ENCODE measurements at regions of chr3 and their contacts with region 1.

Region 1: GRCh38 chr3:127147291-127147885 is 45.5 kb upstream of the PRR23E start:
- DNase-seq: no peak
- H3K4me3 ChIP-seq: no peak overlapping the region
- H3K27me3 ChIP-seq: peaks cover 4% of the 10 kb centered on the region
- CTCF ChIP-seq: no peak

Region 2: DNA sequence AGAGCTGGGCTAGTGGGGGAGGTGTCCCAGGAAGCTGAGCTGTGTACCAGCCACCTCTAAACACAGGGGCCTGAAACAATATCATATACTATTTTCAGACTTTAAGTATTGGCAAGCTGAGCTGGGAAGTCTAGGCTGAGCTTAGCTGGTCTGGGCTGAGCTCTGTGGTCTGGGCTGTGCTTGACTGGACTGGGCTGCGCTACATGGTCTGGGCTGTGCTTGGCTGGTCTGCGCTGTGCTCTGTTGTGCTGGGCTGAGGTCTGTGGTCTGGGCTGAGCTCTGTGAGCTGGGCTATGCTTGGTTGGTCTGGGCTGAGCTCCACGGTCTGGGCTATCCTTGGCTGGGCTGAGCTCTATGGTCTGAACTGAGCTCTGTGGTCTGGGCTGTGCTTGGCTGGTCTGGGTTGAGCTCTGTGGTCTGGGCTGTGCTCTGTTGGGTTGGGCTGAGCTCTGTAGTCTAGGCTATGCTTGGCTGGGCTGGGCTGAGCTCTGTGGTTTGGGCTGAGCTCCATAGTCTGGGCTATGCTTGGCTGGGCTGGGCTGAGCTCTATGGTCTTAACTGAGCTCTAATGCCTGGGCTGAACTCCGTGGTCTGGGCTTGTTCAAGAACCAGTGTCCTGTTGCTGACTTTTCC is 72.5 kb before region 1 on chr3:
- CTCF ChIA-PET with region 1: no interaction called
- POLR2A ChIA-PET with region 1: interaction called, 10 read pairs
- DNase-seq: peak; percentile 14
- H3K4me3 ChIP-seq: no peak overlapping the region
- H3K27me3 ChIP-seq: peaks cover 11% of the 10 kb centered on the region
- CTCF ChIP-seq: no peak

Region 3: DNA sequence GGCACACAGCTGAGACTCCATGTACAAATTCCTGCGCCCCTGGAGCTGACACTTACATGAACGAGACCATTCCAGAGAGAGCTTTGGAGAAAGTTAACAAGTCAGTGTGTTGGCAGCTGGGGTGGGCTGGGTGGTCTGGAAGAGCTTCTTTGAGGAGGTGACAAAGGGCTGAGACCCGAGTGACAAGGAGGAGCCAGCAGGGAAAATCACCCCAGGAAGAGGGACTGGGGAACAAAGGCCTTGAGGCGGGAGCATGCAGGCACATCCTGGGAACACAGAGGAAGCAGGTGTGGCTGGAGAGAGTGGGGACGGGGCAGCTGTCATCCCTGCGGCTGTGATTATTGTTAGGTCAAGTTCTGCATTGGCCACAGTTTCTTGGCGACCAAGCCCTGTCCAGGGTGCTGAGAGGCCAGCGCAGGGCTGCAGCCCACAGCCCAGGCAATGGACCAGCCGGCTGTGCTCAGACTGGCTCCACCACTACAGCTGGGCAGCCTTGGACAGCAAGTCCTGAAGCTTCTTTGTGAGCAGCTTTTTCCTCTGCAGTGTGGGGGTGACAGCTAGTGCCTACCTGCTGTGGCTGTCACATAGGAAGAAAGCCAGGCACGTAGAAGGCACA is 11.3 kb after region 1 on chr3:
- CTCF ChIA-PET with region 1: no interaction called
- POLR2A ChIA-PET with region 1: no interaction called
- DNase-seq: no peak
- H3K4me3 ChIP-seq: no peak overlapping the region
- H3K27me3 ChIP-seq: peaks cover 4% of the 10 kb centered on the region
- CTCF ChIP-seq: no peak

Measured in BJ (cell line).